Right ventricle myocardium inferior (tissue), 1 donor: ENCODE measurements at regions of chr9 and their contacts with region 1.

Region 1: GRCh38 chr9:121213136-121213806 is 11.6 kb upstream of the RAB14 start:
- DNase-seq: peak; percentile 92
- ATAC-seq: peak; percentile 89

Region 2: GRCh38 chr9:120807607-120808379 is 405.5 kb before region 1 on chr9:
- intact Hi-C with region 1: no loop called
- DNase-seq: no peak
- ATAC-seq: no peak

Region 3: DNA sequence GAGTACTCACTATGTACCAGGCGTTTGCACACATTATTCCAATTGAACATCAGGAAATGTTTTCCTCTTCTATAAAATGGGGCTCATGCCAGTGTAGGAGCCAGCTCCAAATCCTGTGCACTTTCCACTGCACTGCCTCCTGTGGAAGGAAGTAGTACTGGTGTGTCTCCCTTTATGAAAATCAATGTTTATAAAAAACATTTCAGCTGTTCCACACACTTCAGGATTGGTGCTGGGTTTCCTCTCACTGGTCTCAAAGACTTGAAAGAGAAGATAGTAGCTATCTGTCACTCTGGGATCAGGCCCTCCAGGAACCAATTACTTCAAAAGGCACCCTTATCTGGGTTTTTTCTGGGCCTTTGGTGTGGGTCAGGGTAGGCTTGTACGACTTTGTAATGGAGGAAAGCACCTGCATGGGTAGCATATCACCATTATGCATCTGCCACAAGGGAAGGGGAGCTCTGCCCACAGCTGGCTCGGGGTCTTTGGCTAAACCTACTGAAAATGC is 44.1 kb before region 1 on chr9:
- intact Hi-C with region 1: no loop called
- DNase-seq: no peak
- ATAC-seq: peak; percentile 68

Region 4: GRCh38 chr9:121179930-121180681 is 33.2 kb before region 1 on chr9:
- intact Hi-C with region 1: no loop called
- DNase-seq: no peak
- ATAC-seq: no peak

Region 5: DNA sequence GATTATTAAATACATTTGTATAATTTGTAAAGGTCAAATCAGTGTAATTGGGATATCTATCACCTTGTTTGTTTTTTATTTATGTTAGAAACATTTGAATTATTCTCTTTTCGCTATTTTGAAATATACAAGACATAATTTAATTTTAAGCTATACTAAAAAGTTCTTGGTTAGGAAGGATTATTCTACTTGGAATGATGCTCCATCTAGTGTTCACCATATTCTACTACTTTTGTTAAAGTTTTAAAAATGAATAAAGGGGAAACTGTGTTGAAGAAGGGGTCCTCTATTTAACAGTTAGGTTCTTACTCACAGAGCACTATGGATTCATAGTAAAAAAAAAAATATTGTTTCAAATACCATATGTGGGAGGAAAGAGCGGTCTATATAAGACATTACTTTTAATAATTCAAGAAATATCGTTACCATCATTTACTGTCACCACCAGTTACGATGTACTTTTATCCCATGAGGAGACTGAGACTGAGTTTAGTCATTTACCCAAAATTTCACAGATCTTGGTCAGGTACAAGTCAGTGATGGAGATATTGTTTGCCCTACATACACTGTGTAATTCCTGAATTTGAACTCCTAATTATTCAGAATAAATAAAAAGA is 163.1 kb after region 1 on chr9:
- intact Hi-C with region 1: loop called (anchors 5 kb)
- DNase-seq: no peak
- ATAC-seq: no peak

Region 6: GRCh38 chr9:121399883-121400607 is 186.8 kb after region 1 on chr9:
- intact Hi-C with region 1: loop called (anchors 1 kb)
- DNase-seq: no peak
- ATAC-seq: no peak

Region 7: DNA sequence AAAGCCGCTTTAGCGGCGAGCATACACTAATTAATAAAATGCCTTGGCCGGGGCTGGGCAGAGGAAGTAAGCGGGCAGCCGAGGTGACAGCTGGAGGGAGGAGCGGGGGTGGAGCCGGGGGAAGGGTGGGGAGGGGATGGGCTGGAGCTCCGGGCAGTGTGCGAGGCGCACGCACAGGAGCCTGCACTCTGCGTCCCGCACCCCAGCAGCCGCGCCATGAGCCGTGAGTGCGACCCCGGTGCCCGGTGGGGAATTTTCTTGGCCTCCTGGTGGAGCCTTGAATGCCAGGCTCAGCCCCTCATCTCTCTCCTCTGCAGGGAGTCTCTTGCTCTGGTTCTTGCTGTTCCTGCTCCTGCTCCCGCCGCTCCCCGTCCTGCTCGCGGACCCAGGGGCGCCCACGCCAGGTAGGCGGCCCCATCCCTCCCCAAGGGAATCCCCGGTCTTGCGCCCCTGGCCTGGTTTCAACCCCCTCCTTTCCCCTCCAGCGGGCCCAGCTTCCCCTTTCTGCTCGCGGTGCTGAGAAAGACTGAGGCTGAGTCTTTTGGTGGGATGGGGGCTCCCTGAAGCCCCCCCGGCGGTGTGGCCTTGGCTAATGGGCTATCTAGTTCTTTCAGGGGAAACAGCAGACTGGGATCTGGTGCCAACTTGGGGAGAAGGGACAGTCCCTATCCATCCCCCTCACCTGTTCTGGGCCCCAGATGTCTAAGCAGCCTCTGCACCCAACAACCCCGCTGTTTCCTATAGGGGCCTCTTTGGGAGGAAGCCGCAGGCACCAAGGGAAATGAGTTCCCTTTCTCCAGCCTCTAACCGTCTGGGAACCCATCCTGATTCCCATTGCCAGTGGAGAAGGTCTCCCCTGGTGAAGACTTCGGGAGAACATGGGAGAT is 1157.8 kb after region 1 on chr9 and contains the start of gene PTGS1:
- intact Hi-C with region 1: no loop called
- DNase-seq: peak; percentile 87
- ATAC-seq: peak; percentile 67
- total RNA-seq, gene PTGS1: 4.0 TPM